ENCODE measurements at regions of chr2 and their contacts with region 1.

Region 1: GRCh38 chr2:204705243-204705932 is 160.1 kb downstream of the PARD3B start:
- DNase-seq: no peak
- ATAC-seq: no peak
- H3K4me3 ChIP-seq: no peak overlapping the region
- H3K4me3 Mint-ChIP-seq: no peak overlapping the region
- H3K27ac ChIP-seq: no peak overlapping the region
- H3K27ac Mint-ChIP-seq: no peak overlapping the region
- H3K4me1 ChIP-seq: no peaks in the 10 kb centered on the region
- H3K4me1 Mint-ChIP-seq: peaks cover 0 to under 1% (median 0%) of the 10 kb centered on the region in 7 donors
- H3K27me3 ChIP-seq: no peaks in the 10 kb centered on the region
- H3K27me3 Mint-ChIP-seq: peaks cover 0 to 14% (median 0%) of the 10 kb centered on the region in 5 donors

Region 2: GRCh38 chr2:203366639-203367465 is 1338.5 kb before region 1 on chr2:
- CTCF ChIA-PET with region 1: no interaction called
- POLR2A ChIA-PET with region 1: no interaction called
- intact Hi-C with region 1: no loop called
- DNase-seq: no peak
- ATAC-seq: no peak
- H3K4me3 ChIP-seq: no peak overlapping the region
- H3K4me3 Mint-ChIP-seq: no peak overlapping the region
- H3K27ac ChIP-seq: no peak overlapping the region
- H3K27ac Mint-ChIP-seq: no peak overlapping the region
- H3K4me1 ChIP-seq: no peaks in the 10 kb centered on the region
- H3K4me1 Mint-ChIP-seq: peaks cover 0 to 1% (median 0%) of the 10 kb centered on the region in 7 donors
- H3K27me3 ChIP-seq: no peaks in the 10 kb centered on the region
- H3K27me3 Mint-ChIP-seq: no peaks in the 10 kb centered on the region

Region 3: GRCh38 chr2:204081487-204082425 is 623.6 kb before region 1 on chr2:
- CTCF ChIA-PET with region 1: no interaction called
- POLR2A ChIA-PET with region 1: no interaction called
- intact Hi-C with region 1: no loop called
- DNase-seq: no peak
- ATAC-seq: no peak
- H3K4me3 ChIP-seq: no peak overlapping the region
- H3K4me3 Mint-ChIP-seq: no peak overlapping the region
- H3K27ac ChIP-seq: no peak overlapping the region
- H3K27ac Mint-ChIP-seq: no peak overlapping the region
- H3K4me1 ChIP-seq: no peaks in the 10 kb centered on the region
- H3K4me1 Mint-ChIP-seq: no peaks in the 10 kb centered on the region
- H3K27me3 ChIP-seq: no peaks in the 10 kb centered on the region
- H3K27me3 Mint-ChIP-seq: peaks cover 0 to 14% (median 5%) of the 10 kb centered on the region in 5 donors

Region 4: DNA sequence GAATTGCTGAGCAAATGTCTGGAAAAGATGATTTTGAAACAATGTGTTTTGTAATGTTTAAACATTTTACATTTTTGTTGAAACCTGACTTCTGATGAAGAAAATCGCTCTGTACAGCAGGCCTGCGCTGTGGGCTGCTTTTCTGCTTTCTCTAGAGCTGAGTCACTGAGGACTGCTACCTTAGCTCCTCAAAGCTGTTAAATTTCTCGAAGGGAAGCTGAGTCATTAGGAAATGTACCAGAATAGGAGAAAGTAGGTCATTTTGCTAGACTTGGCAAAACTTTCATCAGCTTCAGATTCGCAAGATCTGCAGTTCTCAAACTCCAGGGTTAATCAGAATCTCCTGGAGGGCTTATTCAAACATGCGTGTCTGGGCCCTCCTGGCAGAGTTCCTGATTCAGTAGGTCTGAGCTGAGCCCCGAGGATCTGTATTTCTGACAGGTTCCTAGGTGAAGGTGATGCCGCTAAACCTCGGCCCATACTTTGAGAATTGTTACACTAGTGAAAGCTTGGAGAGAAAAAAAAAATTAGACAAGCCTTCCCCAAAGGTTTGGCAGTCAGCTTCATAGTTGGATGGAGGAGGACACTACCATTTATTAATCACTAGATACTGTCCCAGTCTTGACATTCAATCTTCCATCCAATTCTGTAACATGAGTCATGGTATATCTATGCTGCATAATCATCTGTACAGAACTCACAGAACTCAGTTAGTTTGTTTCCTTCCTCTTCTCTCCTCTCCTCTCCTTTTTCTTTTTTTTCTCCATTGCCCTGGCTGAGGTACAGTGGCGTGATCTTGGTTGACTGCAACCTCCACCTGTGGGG is 137.5 kb after region 1 on chr2:
- CTCF ChIA-PET with region 1: no interaction called
- POLR2A ChIA-PET with region 1: no interaction called
- intact Hi-C with region 1: loop called in 1 of 2 experiments (anchors 10 kb)
- DNase-seq: no peak
- ATAC-seq: no peak
- H3K4me3 ChIP-seq: no peak overlapping the region
- H3K4me3 Mint-ChIP-seq: no peak overlapping the region
- H3K27ac ChIP-seq: no peak overlapping the region
- H3K27ac Mint-ChIP-seq: peak overlapping the region in 1 of 9 donors; percentile 51
- H3K4me1 ChIP-seq: no peaks in the 10 kb centered on the region
- H3K4me1 Mint-ChIP-seq: peaks cover 0 to 22% (median 0%) of the 10 kb centered on the region in 7 donors
- H3K27me3 ChIP-seq: no peaks in the 10 kb centered on the region
- H3K27me3 Mint-ChIP-seq: peaks cover 0 to 17% (median 0%) of the 10 kb centered on the region in 5 donors

Measured in naive thymus-derived CD4-positive, alpha-beta T cell (primary cell).